ENCODE measurements at regions of chr9 and their contacts with region 1.

Region 1: DNA sequence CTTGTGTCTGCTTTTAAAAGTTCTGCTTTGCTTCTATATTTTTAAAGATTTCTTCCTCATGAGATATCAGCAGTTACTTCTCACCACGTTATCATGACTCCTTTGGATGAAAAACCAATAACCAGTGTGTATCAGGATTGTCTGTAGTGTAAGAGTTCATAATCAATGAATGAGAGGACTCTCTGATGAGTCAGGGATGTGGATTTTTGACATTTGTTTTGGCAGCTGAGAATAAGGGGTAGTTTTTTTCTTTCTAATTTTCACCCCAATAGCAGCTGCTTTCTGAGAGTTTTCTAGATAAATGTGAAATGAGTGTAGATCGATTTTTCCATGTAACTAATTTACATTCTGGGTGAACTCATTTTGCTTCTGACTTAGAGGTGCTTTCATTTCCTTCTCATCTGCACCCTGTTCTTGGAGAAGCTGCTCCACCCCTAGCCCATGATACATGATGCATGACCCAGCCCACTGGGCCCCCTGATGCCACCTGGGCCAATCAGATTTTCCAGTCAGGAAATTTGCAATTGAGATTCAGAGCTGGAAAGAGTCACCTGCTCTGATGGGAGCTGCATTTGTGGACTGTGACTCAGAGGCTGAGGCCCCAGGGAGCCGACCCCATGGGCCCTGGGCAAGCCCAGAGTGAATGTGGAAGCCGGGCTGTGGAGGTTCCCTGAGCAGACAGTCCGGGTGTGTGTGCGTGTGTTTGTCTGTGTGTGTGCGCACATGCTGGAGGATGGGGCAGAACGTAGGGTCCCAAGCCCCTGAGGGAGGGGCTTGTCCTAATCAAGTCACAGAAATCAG is 159.3 kb downstream of the RGS3 start:
- DNase-seq: peak; percentile 92
- H3K4me3 Mint-ChIP-seq: peak overlapping the region; percentile 63
- H3K27ac Mint-ChIP-seq: peak overlapping the region; percentile 99
- H3K4me1 Mint-ChIP-seq: peaks cover 54% of the 10 kb centered on the region
- H3K27me3 Mint-ChIP-seq: no peaks in the 10 kb centered on the region

Region 2: DNA sequence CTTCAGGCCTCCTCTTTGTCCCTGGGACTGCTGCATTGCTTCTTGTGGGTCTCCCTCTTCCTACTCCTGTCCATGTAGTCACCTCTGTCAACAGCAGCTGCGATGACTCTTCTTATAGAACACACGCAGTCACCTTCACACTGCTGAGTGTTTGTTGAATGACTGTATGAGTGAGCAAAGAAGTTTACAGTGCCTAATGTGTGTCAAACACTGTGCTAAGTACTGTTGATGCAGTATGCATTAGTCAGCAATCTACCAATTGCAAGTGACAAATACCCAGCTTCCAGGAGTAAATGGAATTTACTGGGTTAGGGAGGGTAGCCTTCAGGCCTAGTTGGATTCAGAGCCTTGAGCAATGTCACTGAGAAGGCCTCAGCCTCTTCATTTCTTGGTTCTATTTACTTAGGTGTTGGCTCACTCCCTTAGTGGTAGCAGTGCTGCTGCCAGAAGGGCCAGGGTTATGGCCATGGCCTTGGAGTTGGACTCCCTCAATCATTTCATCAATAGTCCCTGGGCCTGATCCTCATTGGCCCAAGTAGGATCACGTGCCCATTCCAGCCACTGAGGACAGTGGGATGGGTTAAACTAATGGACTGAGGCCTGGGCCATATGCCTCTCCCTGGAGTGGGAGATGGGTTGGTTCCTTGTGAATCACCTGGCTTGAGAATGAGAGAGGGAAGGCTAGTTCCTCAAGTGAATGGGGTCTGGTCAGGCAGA is 65.8 kb before region 1 on chr9:
- CTCF ChIA-PET with region 1: no interaction called
- POLR2A ChIA-PET with region 1: no interaction called
- intact Hi-C with region 1: loop called (anchors 2 kb)
- DNase-seq: peak; percentile 26
- H3K4me3 Mint-ChIP-seq: no peak overlapping the region
- H3K27ac Mint-ChIP-seq: peak overlapping the region; percentile 44
- H3K4me1 Mint-ChIP-seq: peaks cover 47% of the 10 kb centered on the region
- H3K27me3 Mint-ChIP-seq: no peaks in the 10 kb centered on the region